SK-MEL-5 (cell line): ENCODE measurements at regions of chr17 and their contacts with region 1.

Region 1: DNA sequence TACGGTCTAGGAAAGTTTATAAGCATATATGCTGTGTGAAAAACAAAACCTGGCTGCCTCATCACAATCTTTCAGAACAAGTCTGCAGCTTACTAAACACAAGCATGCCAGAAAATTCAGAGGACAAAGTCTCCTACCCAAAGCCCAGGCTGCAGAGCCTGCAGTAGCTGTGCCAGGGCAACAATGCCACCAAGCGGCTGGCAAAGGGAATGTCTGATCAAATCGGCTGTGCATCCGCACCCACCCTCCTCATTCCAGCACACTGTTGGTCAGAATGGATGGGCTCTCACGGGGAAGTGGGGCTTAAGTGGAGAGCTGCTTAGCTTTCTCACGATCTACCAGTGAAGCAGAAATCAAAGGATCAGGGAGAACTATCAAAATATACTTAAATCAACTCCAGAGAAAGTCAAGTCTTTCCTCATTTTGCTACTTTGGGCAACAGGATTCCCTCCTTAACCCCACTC is 73.5 kb downstream of the CYTH1 start:
- DNase-seq: peak; percentile 96

Region 2: GRCh38 chr17:78583091-78583490 is 125.5 kb before region 1 on chr17:
- in situ Hi-C with region 1: no loop called
- DNase-seq: peak; percentile 83

Region 3: GRCh38 chr17:78598013-78598471 is 110.5 kb before region 1 on chr17:
- in situ Hi-C with region 1: loop called (anchors 25 kb)
- DNase-seq: no peak